CD8-positive, alpha-beta T cell (primary cell): ENCODE measurements at regions of chr1 and their contacts with region 1.

Region 1: GRCh38 chr1:40153073-40153770 is 8.0 kb upstream of the RLF start:
- DNase-seq: peak in 5 of 9 experiments; percentile 5 to 84 (median 37)
- ATAC-seq: peak; percentile 88
- H3K4me3 ChIP-seq: no peak overlapping the region
- H3K4me3 Mint-ChIP-seq: peak overlapping the region; percentile 20
- H3K27ac ChIP-seq: no peak overlapping the region
- H3K27ac Mint-ChIP-seq: peak overlapping the region; percentile 65
- H3K4me1 ChIP-seq: no peaks in the 10 kb centered on the region
- H3K4me1 Mint-ChIP-seq: peaks cover 9% of the 10 kb centered on the region
- H3K27me3 ChIP-seq: no peaks in the 10 kb centered on the region
- H3K27me3 Mint-ChIP-seq: no peaks in the 10 kb centered on the region
- CTCF ChIP-seq: peak; percentile 76

Region 2: DNA sequence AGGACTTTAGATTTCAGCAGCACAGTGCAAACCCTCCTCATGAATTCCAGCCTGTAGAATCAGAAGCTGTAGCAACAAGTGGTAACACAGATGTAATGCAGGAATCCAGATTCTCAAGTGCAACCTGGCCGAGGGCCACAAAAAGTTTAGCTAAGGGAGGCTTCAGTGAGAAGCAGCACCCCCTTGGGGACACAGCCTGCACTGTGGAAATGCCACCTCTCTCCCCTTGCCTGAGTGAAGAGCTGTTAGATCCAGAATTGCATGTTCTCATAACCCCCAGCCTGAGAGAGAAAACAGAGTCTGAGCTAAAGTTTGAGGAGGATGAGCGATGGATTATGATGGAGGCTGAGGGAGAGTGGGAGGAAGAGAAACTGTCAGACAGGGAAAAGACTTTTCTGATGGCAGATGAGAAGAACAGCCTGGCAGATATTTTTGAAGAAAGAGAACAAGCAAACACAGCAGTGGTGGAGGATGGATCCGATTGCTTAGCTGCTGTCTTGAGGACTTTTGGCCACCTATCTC is 742.2 kb before region 1 on chr1:
- CTCF ChIA-PET with region 1: no interaction called
- POLR2A ChIA-PET with region 1: no interaction called
- intact Hi-C with region 1: no loop called
- DNase-seq: peak; percentile 25 to 77 (median 65)
- ATAC-seq: peak; percentile 45
- H3K4me3 ChIP-seq: no peak overlapping the region
- H3K4me3 Mint-ChIP-seq: no peak overlapping the region
- H3K27ac ChIP-seq: no peak overlapping the region
- H3K27ac Mint-ChIP-seq: no peak overlapping the region
- H3K4me1 ChIP-seq: peaks cover 35% of the 10 kb centered on the region
- H3K4me1 Mint-ChIP-seq: peaks cover 60% of the 10 kb centered on the region
- H3K27me3 ChIP-seq: no peaks in the 10 kb centered on the region
- H3K27me3 Mint-ChIP-seq: no peaks in the 10 kb centered on the region
- CTCF ChIP-seq: peak; percentile 55

Region 3: GRCh38 chr1:40185951-40186864 is 33.0 kb after region 1 on chr1:
- CTCF ChIA-PET with region 1: interaction called, 31 read pairs
- POLR2A ChIA-PET with region 1: no interaction called
- intact Hi-C with region 1: no loop called
- DNase-seq: peak in 5 of 9 experiments; percentile 11 to 54 (median 36)
- ATAC-seq: peak; percentile 78
- H3K4me3 ChIP-seq: no peak overlapping the region
- H3K4me3 Mint-ChIP-seq: no peak overlapping the region
- H3K27ac ChIP-seq: no peak overlapping the region
- H3K27ac Mint-ChIP-seq: peak overlapping the region; percentile 66
- H3K4me1 ChIP-seq: peaks cover 18% of the 10 kb centered on the region
- H3K4me1 Mint-ChIP-seq: peaks cover 55% of the 10 kb centered on the region
- H3K27me3 ChIP-seq: no peaks in the 10 kb centered on the region
- H3K27me3 Mint-ChIP-seq: no peaks in the 10 kb centered on the region
- CTCF ChIP-seq: no peak

Region 4: DNA sequence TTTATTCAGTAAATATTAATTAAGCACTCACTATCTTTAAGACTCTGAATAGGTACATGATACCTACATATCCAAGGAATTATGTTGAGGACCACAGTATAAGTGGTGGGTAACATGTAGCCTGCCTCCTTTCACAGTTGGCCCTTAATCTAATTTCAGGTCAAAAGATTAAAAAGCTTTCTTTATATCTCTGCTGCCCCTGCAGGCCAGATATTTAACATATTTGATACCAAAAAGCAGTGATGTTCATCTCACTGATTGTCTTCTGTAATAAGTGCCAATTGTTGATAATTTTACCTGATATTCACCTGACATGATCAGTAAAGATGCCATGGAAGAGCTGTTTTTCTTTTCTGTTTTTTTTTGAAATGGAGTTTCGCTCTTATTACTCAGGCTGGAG is 44.4 kb after region 1 on chr1:
- CTCF ChIA-PET with region 1: interaction called, 18 read pairs
- POLR2A ChIA-PET with region 1: interaction called, 4 read pairs
- intact Hi-C with region 1: loop called in 1 of 2 experiments (anchors 2 kb)
- DNase-seq: peak in 2 of 9 experiments; percentile 7 to 20
- ATAC-seq: no peak
- H3K4me3 ChIP-seq: no peak overlapping the region
- H3K4me3 Mint-ChIP-seq: no peak overlapping the region
- H3K27ac ChIP-seq: no peak overlapping the region
- H3K27ac Mint-ChIP-seq: no peak overlapping the region
- H3K4me1 ChIP-seq: no peaks in the 10 kb centered on the region
- H3K4me1 Mint-ChIP-seq: no peaks in the 10 kb centered on the region
- H3K27me3 ChIP-seq: no peaks in the 10 kb centered on the region
- H3K27me3 Mint-ChIP-seq: no peaks in the 10 kb centered on the region
- CTCF ChIP-seq: no peak

Region 5: GRCh38 chr1:40301541-40302299 is 148.5 kb after region 1 on chr1:
- CTCF ChIA-PET with region 1: no interaction called
- POLR2A ChIA-PET with region 1: no interaction called
- intact Hi-C with region 1: no loop called
- DNase-seq: no peak
- ATAC-seq: no peak
- H3K4me3 ChIP-seq: no peak overlapping the region
- H3K4me3 Mint-ChIP-seq: no peak overlapping the region
- H3K27ac ChIP-seq: no peak overlapping the region
- H3K27ac Mint-ChIP-seq: no peak overlapping the region
- H3K4me1 ChIP-seq: no peaks in the 10 kb centered on the region
- H3K4me1 Mint-ChIP-seq: no peaks in the 10 kb centered on the region
- H3K27me3 ChIP-seq: no peaks in the 10 kb centered on the region
- H3K27me3 Mint-ChIP-seq: no peaks in the 10 kb centered on the region
- CTCF ChIP-seq: no peak

Region 6: DNA sequence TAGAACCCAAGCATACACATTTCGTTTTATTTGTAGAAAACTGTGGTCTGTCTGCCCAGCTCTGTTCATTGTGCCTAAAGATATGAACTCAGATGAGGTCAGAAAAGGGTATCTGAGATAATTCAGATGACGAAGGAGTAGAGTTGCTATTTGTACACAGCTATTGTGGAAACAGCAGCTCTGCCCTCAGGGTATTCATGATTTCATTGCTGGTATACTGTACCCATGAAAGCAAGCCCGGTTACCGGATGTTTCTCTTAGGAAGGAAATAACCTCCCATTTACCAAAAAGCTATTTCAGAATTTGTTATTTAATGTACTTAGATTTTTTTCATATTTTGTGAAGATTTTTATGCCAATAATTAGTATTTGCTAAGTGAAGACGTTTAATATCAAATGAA is 258.1 kb after region 1 on chr1:
- CTCF ChIA-PET with region 1: interaction called, 11 read pairs
- POLR2A ChIA-PET with region 1: no interaction called
- intact Hi-C with region 1: no loop called
- DNase-seq: peak in 1 of 9 experiments; percentile 39
- ATAC-seq: no peak
- H3K4me3 ChIP-seq: no peak overlapping the region
- H3K4me3 Mint-ChIP-seq: no peak overlapping the region
- H3K27ac ChIP-seq: peak overlapping the region in 1 of 2 experiments; percentile 25
- H3K27ac Mint-ChIP-seq: peak overlapping the region; percentile 60
- H3K4me1 ChIP-seq: peaks cover 34% of the 10 kb centered on the region
- H3K4me1 Mint-ChIP-seq: peaks cover 54% of the 10 kb centered on the region
- H3K27me3 ChIP-seq: no peaks in the 10 kb centered on the region
- H3K27me3 Mint-ChIP-seq: no peaks in the 10 kb centered on the region
- CTCF ChIP-seq: no peak

Region 7: GRCh38 chr1:40438391-40439015 is 285.3 kb after region 1 on chr1:
- CTCF ChIA-PET with region 1: interaction called, 36 read pairs
- POLR2A ChIA-PET with region 1: no interaction called
- intact Hi-C with region 1: no loop called
- DNase-seq: peak in 4 of 9 experiments; percentile 17 to 63 (median 40)
- ATAC-seq: peak; percentile 40
- H3K4me3 ChIP-seq: no peak overlapping the region
- H3K4me3 Mint-ChIP-seq: no peak overlapping the region
- H3K27ac ChIP-seq: no peak overlapping the region
- H3K27ac Mint-ChIP-seq: no peak overlapping the region
- H3K4me1 ChIP-seq: no peaks in the 10 kb centered on the region
- H3K4me1 Mint-ChIP-seq: peaks cover 2% of the 10 kb centered on the region
- H3K27me3 ChIP-seq: no peaks in the 10 kb centered on the region
- H3K27me3 Mint-ChIP-seq: no peaks in the 10 kb centered on the region
- CTCF ChIP-seq: peak; percentile 70